ENCODE measurements at regions of chr15 and their contacts with region 1.

Region 1: DNA sequence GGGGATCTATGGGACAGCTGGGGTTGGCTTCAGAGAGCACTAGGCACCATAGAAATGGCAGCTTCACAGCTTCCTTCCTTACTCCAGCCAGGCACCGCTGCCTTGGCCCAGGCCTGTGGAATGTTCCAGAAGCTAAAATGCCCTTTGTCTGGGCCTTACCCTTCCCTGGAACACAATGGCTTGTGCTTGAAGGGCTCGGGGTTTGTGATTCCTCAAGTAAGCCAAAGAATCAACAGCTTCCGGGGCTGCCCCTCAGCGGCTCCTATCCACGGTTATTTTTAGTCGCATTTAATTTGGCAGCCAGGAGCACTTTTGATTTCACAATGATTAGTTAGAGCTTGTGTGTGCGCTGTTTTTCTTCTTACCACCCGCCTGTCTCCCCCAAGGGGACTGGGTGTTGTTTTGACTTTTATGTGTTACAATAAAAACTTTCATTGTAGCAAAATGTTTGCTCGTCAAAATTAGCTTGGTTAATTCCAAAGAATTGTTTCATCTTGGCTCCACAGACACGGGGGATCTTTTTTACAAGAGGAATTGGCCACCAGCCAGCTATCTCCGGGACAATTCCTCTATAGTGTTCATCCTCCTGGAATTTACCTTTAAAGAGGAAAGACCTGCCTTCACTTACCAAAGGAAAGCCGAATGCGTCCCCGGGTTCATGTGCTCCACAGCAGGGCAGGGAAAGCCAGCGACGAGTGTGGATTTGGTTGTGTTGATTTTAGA is 73.8 kb downstream of the TLE3 start:
- DNase-seq: peak; percentile 48 to 64
- ATAC-seq: peak; percentile 85 to 87
- H3K4me3 ChIP-seq: peak overlapping the region in 1 of 4 donors; percentile 10
- H3K27ac ChIP-seq: peak overlapping the region; percentile 39 to 66 (median 51)
- H3K4me1 ChIP-seq: peaks cover 24 to 30% of the 10 kb centered on the region in 2 donors
- H3K27me3 ChIP-seq: no peaks in the 10 kb centered on the region
- CTCF ChIP-seq: no peak
- POLR2A ChIP-seq: no peak

Region 2: DNA sequence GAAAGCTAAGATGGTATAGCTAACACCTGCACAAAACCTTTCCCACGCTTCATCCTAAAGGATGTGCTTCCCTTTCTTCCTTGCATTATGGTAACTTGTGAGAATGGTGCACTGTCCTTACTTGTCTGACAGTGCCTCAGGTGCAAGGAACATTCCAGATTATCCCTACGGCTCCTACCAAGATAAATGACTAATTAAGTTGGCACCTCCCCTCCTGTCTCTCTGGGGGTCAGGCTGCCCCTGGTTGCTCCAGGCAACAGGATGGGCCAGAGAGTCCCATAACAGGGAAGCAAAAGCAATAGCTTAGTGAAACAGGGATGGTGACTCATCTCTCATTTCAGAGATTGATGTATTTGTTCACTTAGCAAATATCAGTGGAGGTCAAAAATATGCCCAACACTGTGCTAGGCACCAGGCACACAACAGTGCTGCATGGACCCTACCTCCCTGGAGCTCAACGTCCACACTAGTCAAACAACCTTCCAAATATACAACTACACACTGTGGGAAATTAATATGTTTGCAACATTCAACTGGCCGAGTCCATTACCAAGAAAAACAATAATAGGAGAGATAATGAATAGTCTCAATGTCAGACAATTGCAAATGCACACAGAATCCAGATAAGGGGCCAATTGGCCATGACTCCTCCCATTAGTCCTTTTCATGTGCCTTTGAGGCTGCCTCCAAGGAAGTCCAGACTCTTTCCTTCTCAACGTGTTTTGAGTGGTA is 175.3 kb before region 1 on chr15:
- in situ Hi-C with region 1: no loop called
- intact Hi-C with region 1: no loop called
- DNase-seq: no peak
- ATAC-seq: no peak
- H3K4me3 ChIP-seq: no peak overlapping the region
- H3K27ac ChIP-seq: no peak overlapping the region
- H3K4me1 ChIP-seq: no peaks in the 10 kb centered on the region
- H3K27me3 ChIP-seq: no peaks in the 10 kb centered on the region
- CTCF ChIP-seq: no peak
- POLR2A ChIP-seq: no peak

Region 3: DNA sequence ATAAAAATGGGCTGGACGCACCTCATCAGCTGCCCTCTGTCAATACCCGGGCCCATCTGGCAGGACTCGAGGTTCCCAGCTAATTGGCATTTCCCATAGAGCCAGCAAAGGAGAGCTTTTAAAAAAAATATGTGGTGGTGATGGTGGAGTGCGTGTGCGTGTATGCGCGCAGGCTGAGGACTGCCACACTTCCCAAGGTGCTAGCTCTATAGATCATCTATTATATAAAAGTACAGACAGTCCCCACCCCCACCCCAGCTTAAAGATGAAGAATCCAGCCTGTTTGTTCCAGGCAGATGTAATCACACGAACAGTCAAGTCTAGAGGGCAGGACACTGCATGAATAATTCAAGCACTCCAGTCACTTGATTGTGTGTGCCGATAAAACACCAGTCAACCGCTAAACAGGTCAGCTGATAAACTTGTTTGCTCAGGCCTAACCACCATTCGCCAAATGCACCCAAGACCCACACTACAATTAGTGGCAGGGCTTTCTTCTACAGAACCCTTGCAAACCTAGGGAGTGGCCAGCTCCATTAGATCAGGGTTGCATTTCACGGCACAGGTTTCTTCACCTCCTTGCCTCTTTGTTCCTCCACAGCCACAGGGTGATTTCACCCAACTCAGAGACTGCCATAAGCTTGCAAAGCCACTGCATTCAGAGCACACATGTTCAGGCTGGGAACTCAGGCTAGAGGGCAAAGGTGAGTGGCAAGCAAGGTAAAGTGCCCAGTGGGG is 68.0 kb after region 1 on chr15:
- in situ Hi-C with region 1: no loop called
- intact Hi-C with region 1: loop called (anchors 2 kb)
- DNase-seq: no peak
- ATAC-seq: no peak
- H3K4me3 ChIP-seq: no peak overlapping the region
- H3K27ac ChIP-seq: no peak overlapping the region
- H3K4me1 ChIP-seq: peaks cover 47 to 62% of the 10 kb centered on the region in 2 donors
- H3K27me3 ChIP-seq: peaks cover 0 to 12% (median 3%) of the 10 kb centered on the region in 3 donors
- CTCF ChIP-seq: no peak
- POLR2A ChIP-seq: no peak